ENCODE measurements at regions of chr6 and their contacts with region 1.

Region 1: GRCh38 chr6:83292900-83293843 is 100.0 kb downstream of the RWDD2A start:
- DNase-seq: no peak
- H3K4me3 Mint-ChIP-seq: no peak overlapping the region
- H3K27ac Mint-ChIP-seq: peak overlapping the region; percentile 1
- H3K4me1 Mint-ChIP-seq: peaks cover 5% of the 10 kb centered on the region
- H3K27me3 Mint-ChIP-seq: peaks cover 19% of the 10 kb centered on the region

Region 2: DNA sequence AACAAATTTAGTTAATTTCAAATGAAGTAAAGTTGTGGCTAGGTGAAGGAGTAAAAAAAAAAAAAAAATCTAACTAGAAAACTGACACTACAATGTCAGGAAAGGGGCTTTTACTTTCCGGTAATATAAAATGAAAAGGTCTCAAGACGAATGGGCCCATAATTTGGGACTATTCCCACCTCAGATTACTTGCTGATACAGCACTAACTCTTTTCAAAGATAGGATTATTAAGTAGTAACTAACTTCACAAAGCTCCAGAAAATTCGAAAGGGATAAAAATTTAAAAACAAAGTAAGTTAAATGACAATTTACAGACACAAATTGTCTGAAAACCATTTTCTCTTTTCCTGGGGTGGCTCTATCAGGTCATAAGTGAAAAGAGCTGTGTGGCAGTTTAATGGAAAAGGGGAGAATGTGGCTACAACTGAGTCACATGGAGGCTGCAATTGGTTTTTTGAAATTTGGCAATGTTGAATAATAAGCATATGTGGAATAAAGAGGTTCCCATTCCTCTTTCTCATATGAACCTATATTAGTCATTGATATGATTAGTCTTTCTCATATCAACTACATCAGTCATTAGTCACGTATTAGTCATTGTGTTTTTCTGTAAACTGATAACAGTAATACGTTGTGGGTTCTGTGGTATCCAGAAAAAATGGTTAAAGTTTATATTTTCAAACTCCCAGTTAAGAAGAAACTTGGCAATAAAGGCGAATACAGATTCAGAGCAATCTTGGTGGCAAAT is 22.0 kb before region 1 on chr6:
- intact Hi-C with region 1: loop called (anchors 1 kb)
- DNase-seq: no peak
- H3K4me3 Mint-ChIP-seq: no peak overlapping the region
- H3K27ac Mint-ChIP-seq: no peak overlapping the region
- H3K4me1 Mint-ChIP-seq: no peaks in the 10 kb centered on the region
- H3K27me3 Mint-ChIP-seq: no peaks in the 10 kb centered on the region

Measured in activated CD4-positive, alpha-beta T cell treated with anti-CD3 and anti-CD28 coated beads, Interleukin-2, amount 10 ng/mL, durations not matched to agents 24 days and 14 days (primary cell).